ENCODE measurements at regions of chr12 and their contacts with region 1.

Region 1: GRCh38 chr12:12171991-12172521 is 94.8 kb downstream of the LRP6 start:
- DNase-seq: no peak
- ATAC-seq: no peak

Region 2: GRCh38 chr12:11705010-11705409 is 467.0 kb before region 1 on chr12:
- intact Hi-C with region 1: no loop called
- DNase-seq: no peak
- ATAC-seq: peak; percentile 71

Region 3: GRCh38 chr12:12107678-12108077 is 64.4 kb before region 1 on chr12:
- intact Hi-C with region 1: no loop called
- DNase-seq: no peak
- ATAC-seq: no peak

Region 4: GRCh38 chr12:12266873-12267741 is 95.1 kb after region 1 on chr12 and contains the start of gene LRP6:
- intact Hi-C with region 1: loop called (anchors 10 kb)
- DNase-seq: peak; percentile 94
- ATAC-seq: peak; percentile 97
- total RNA-seq, gene LRP6: 56.1 TPM

Region 5: DNA sequence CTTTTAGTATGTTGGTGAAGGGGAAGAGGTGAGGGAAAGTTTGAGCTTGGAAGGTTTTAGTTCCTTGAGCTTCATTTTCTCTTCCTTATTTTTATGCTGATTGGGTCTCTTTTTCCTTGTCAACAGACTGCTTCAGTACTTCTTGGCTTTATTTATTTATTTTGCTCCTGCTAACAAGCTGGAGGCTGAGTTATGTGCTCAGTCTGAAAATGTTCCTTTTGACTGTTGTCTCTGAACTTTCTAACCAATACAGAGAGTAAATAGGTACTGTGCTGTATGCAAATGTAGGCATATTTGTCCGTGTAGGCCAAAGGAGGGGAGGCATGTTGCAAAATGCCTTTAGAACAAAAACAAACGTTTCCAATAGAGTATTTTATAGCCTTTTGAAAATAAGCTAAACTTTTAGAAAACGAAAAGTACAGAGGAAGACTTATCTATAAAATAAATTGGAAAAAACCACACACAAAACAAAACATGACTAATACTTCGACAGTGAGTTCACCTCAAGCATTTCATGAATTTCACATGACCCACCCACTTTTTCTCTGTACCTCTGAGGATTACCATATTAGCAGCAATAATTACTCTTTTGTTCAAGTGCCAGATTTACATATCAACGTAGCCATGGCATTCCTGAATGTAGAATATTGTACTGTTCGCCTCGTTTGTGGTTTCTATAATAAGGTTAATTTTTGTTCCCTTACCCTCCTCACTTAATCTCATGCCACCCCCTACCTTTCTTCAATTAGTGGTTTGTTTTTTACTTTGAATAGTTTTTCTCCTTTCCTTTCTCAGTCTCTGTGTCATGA is 434.9 kb after region 1 on chr12:
- intact Hi-C with region 1: no loop called
- DNase-seq: no peak
- ATAC-seq: no peak